CD8-positive, alpha-beta T cell (primary cell): ENCODE measurements at regions of chr5 and their contacts with region 1.

Region 1: DNA sequence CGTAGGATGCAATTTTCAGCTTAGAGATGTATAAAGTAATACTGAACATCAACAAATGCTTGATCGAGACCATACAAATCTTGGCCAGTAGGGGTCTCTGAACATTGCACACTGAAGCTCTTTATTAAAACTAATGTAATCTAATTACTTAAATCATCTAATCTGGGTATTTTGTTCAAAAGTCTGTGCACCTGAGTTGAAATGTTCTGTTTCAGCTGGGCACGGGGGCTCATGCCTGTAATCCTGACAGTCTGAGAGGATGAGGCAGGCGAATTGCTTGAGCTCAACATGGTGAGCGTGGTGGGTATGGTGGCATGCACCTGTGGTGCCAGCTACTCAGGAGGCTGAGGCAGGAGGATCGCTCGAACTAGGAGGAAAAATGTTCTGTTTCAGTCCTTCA is 41.0 kb downstream of the ESM1 start:
- DNase-seq: peak in 8 of 9 experiments; percentile 10 to 77 (median 47)
- ATAC-seq: peak; percentile 49
- H3K4me3 ChIP-seq: no peak overlapping the region
- H3K4me3 Mint-ChIP-seq: no peak overlapping the region
- H3K27ac ChIP-seq: no peak overlapping the region
- H3K27ac Mint-ChIP-seq: no peak overlapping the region
- H3K4me1 ChIP-seq: no peaks in the 10 kb centered on the region
- H3K4me1 Mint-ChIP-seq: no peaks in the 10 kb centered on the region
- H3K27me3 ChIP-seq: no peaks in the 10 kb centered on the region
- H3K27me3 Mint-ChIP-seq: no peaks in the 10 kb centered on the region
- CTCF ChIP-seq: peak; percentile 93

Region 2: GRCh38 chr5:54905943-54906537 is 38.3 kb before region 1 on chr5:
- CTCF ChIA-PET with region 1: interaction called, 58 read pairs
- POLR2A ChIA-PET with region 1: interaction called, 4 read pairs
- intact Hi-C with region 1: loop called (anchors 2 kb)
- DNase-seq: peak; percentile 42 to 80 (median 70)
- ATAC-seq: peak; percentile 36
- H3K4me3 ChIP-seq: no peak overlapping the region
- H3K4me3 Mint-ChIP-seq: no peak overlapping the region
- H3K27ac ChIP-seq: no peak overlapping the region
- H3K27ac Mint-ChIP-seq: no peak overlapping the region
- H3K4me1 ChIP-seq: no peaks in the 10 kb centered on the region
- H3K4me1 Mint-ChIP-seq: peaks cover 10% of the 10 kb centered on the region
- H3K27me3 ChIP-seq: no peaks in the 10 kb centered on the region
- H3K27me3 Mint-ChIP-seq: peaks cover 6% of the 10 kb centered on the region
- CTCF ChIP-seq: peak; percentile 77

Region 3: DNA sequence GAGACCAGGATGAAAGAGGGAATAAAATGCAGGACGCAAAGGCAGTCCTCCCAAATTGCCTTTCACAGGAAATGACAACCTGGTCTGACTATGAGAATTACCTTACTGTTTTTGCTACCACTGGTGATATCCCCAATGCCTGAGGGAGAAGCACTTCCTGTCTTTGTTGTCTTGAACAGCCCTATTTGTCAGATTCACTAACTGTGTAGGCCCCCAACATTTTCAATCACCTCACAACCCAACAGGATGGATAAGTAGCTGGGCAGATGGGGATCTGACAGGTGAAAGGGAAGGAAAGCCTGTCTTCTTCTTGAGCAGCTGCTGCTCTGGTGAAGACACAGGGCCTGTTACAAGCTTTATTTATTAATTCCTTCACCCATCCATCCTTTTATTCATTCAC is 31.3 kb after region 1 on chr5:
- CTCF ChIA-PET with region 1: interaction called, 11 read pairs
- POLR2A ChIA-PET with region 1: no interaction called
- intact Hi-C with region 1: no loop called
- DNase-seq: no peak
- ATAC-seq: no peak
- H3K4me3 ChIP-seq: no peak overlapping the region
- H3K4me3 Mint-ChIP-seq: no peak overlapping the region
- H3K27ac ChIP-seq: no peak overlapping the region
- H3K27ac Mint-ChIP-seq: no peak overlapping the region
- H3K4me1 ChIP-seq: peaks cover 4% of the 10 kb centered on the region
- H3K4me1 Mint-ChIP-seq: peaks cover 9% of the 10 kb centered on the region
- H3K27me3 ChIP-seq: no peaks in the 10 kb centered on the region
- H3K27me3 Mint-ChIP-seq: no peaks in the 10 kb centered on the region
- CTCF ChIP-seq: no peak

Region 4: GRCh38 chr5:55037046-55037771 is 92.8 kb after region 1 on chr5:
- CTCF ChIA-PET with region 1: interaction called, 14 read pairs
- POLR2A ChIA-PET with region 1: interaction called, 4 read pairs
- intact Hi-C with region 1: loop called in 1 of 2 experiments (anchors 2 kb)
- DNase-seq: peak; percentile 13 to 85 (median 56)
- ATAC-seq: peak; percentile 85
- H3K4me3 ChIP-seq: no peak overlapping the region
- H3K4me3 Mint-ChIP-seq: peak overlapping the region; percentile 50
- H3K27ac ChIP-seq: peak overlapping the region; percentile 16 to 72
- H3K27ac Mint-ChIP-seq: peak overlapping the region; percentile 93
- H3K4me1 ChIP-seq: peaks cover 22% of the 10 kb centered on the region
- H3K4me1 Mint-ChIP-seq: peaks cover 31% of the 10 kb centered on the region
- H3K27me3 ChIP-seq: no peaks in the 10 kb centered on the region
- H3K27me3 Mint-ChIP-seq: no peaks in the 10 kb centered on the region
- CTCF ChIP-seq: no peak

Region 5: GRCh38 chr5:55134053-55134722 is 189.8 kb after region 1 on chr5:
- CTCF ChIA-PET with region 1: interaction called, 187 read pairs
- POLR2A ChIA-PET with region 1: no interaction called
- intact Hi-C with region 1: no loop called
- DNase-seq: peak in 2 of 9 experiments; percentile 26 to 27
- ATAC-seq: peak; percentile 52
- H3K4me3 ChIP-seq: no peak overlapping the region
- H3K4me3 Mint-ChIP-seq: no peak overlapping the region
- H3K27ac ChIP-seq: no peak overlapping the region
- H3K27ac Mint-ChIP-seq: no peak overlapping the region
- H3K4me1 ChIP-seq: peaks cover 15% of the 10 kb centered on the region
- H3K4me1 Mint-ChIP-seq: peaks cover 18% of the 10 kb centered on the region
- H3K27me3 ChIP-seq: no peaks in the 10 kb centered on the region
- H3K27me3 Mint-ChIP-seq: no peaks in the 10 kb centered on the region
- CTCF ChIP-seq: no peak

Region 6: GRCh38 chr5:55159763-55160492 is 215.6 kb after region 1 on chr5 and contains the start of gene GPX8:
- CTCF ChIA-PET with region 1: interaction called, 47 read pairs
- POLR2A ChIA-PET with region 1: no interaction called
- intact Hi-C with region 1: loop called in 1 of 2 experiments (anchors 1 kb)
- DNase-seq: peak in 3 of 9 experiments; percentile 32 to 73 (median 64)
- ATAC-seq: peak; percentile 79
- H3K4me3 ChIP-seq: no peak within 1 kb of the TSS
- H3K4me3 Mint-ChIP-seq: no peak within 1 kb of the TSS
- H3K27ac ChIP-seq: no peak within 1 kb of the TSS
- H3K27ac Mint-ChIP-seq: no peak within 1 kb of the TSS
- H3K4me1 ChIP-seq: no peaks in the 10 kb centered on the region
- H3K4me1 Mint-ChIP-seq: no peaks in the 10 kb centered on the region
- H3K27me3 ChIP-seq: no peaks in the 10 kb centered on the region
- H3K27me3 Mint-ChIP-seq: peaks cover 19% of the 10 kb centered on the region
- CTCF ChIP-seq: peak; percentile 73
- total RNA-seq, gene GPX8: not detected

Region 7: DNA sequence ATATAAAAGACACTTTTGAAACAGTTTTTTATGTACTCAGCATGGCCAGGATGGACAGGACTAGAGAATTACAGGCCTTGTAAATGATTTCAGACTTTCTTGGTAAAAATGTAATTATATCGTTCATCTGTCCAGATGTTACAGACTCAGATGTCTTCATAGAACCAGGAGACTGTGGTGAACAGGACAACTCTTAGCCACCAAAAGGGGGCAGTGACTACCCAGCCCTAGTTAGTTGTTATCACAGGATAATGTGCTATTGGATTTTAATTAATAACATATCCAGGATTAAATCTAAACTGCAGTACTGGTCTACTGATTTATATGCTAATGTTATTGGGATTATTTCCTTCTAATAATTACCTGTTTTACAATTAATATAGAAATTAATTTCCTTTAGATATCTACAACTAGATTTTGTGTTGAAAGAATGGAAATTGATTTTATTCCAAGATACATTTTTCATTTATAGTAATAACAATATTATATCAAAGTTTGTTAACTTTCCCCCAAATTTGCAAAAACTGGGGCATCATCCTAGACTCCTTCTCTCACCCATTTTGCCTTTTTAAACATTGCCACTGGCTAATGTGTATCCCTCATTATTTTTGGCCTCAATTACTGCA is 462.8 kb after region 1 on chr5:
- CTCF ChIA-PET with region 1: no interaction called
- POLR2A ChIA-PET with region 1: no interaction called
- intact Hi-C with region 1: no loop called
- DNase-seq: peak in 2 of 9 experiments; percentile 26 to 49
- ATAC-seq: peak; percentile 44
- H3K4me3 ChIP-seq: no peak overlapping the region
- H3K4me3 Mint-ChIP-seq: no peak overlapping the region
- H3K27ac ChIP-seq: no peak overlapping the region
- H3K27ac Mint-ChIP-seq: peak overlapping the region; percentile 43
- H3K4me1 ChIP-seq: peaks cover 7% of the 10 kb centered on the region
- H3K4me1 Mint-ChIP-seq: peaks cover 11% of the 10 kb centered on the region
- H3K27me3 ChIP-seq: no peaks in the 10 kb centered on the region
- H3K27me3 Mint-ChIP-seq: no peaks in the 10 kb centered on the region
- CTCF ChIP-seq: peak; percentile 21